GM10248 (cell line): ENCODE measurements at regions of chr16 and their contacts with region 1.

Region 1: DNA sequence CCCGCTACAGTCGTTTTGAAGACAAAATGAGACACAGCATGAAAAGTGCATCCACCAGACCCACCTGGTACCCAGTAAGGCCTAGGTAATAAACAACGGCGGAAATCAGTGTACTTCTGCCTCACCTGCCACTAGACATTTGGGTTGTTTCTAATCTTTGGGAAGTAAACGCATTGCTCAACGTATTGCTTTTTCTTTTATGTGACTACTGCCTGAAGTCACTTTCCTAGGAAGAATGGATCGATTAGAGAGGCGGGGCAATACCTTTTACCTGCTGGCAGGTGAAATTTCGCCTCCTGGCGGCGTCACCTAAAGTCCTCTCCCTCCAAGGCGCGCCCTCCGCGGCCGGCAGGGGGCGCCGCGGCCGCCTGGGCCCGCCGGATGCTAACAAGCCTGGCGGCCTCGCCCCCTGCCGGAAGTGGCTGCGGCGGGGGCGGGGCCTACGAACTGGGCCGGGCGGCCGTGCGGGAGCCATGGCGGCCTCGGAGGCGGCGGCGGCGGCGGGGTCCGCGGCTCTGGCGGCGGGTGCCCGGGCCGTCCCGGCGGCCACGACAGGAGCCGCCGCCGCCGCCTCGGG is at the start of gene ATMIN:
- DNase-seq: peak; percentile 98
- CTCF ChIP-seq: peak; percentile 98

Region 2: DNA sequence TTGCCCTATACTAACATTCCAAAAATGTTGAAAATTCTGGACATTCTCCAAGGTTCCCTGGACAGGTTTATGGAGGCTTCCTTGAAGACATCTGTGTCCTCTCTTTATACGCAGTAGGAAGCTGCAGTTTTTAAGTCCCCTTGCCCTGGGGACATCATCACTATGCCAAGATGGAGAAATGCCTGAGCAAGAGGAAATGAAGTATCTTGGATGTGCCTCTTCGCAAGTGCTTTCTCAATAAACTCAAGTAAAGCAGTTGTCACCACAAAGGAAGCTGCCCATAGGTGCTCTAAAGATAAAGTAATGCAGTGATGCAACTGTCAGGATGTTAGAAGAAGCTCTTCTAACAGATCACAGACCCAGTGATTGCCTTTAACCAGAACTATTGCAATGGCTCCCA is 302.1 kb before region 1 on chr16:
- CTCF ChIA-PET with region 1: no interaction called
- POLR2A ChIA-PET with region 1: no interaction called
- DNase-seq: no peak
- CTCF ChIP-seq: no peak

Region 3: DNA sequence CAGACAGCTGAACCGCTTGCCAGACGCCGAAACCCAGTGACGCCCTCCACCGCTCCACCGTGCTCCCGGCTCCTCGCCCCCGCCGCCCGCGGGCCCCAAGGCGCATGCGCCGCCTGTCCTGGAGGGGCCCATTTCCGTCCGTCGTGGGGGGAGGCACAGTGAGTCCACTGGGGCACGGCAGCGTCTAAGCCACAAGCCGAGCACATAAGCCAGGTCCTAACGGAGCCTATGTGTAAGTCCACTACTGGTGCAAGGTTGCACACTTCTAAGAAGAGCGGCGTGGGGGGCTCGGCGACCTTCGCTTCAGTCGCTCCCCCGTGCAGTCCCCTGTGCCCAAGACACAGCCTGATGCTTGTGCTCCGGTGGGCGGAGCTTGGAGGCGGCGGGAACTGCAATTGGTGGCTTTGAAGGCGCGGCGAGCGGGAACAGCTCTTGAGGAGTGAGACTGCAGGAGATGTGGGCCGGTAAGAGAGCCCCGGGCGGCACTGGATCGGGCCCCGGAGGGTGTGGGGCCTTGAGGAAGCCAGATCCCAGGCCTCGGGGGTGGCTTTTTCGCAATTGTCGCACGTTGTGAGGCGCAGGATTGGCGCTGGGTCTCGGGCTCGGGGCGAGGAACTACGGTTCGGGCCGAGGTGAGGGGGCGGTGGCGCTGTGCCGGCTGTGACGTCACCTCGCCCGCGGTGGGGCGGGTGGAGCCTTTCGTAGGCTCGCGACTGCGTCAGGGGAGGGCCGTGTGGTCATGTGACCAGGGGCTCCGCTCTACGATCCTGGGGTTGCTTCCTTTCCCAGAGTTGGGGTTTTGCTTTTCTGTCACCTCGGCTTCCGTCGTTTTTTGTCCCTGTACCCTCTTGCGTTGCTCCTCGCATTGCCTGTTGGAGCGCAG is 28.4 kb before region 1 on chr16 and contains the starts of genes CENPN and CMC2:
- CTCF ChIA-PET with region 1: interaction called, 169 read pairs
- POLR2A ChIA-PET with region 1: no interaction called
- DNase-seq: peak; percentile 94
- CTCF ChIP-seq: no peak

Region 4: GRCh38 chr16:81018496-81018895 is 17.0 kb before region 1 on chr16:
- CTCF ChIA-PET with region 1: interaction called, 169 read pairs
- POLR2A ChIA-PET with region 1: no interaction called
- DNase-seq: no peak
- CTCF ChIP-seq: no peak

Region 5: GRCh38 chr16:81060576-81061306 is 25.3 kb after region 1 on chr16:
- CTCF ChIA-PET with region 1: interaction called, 14 read pairs
- POLR2A ChIA-PET with region 1: no interaction called
- DNase-seq: no peak
- CTCF ChIP-seq: no peak

Region 6: DNA sequence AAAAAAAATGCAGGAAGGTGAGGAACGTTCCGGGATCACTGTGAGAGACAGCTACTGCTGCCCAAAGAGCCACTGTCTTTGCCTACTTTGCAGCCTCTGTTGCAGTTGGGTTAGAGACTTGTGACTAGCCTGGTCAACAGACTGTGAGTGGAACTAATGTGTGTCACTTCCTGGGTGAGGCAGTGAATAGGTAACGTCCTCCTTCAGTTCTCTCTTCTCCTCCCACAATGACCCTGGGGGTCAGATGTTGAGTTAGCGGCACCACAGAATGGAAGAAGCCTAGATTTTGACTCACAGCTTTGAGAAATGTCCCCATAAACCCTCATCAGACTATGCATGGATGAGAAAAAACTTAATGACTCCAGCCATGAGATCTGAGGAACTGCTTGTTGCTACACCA is 36.3 kb after region 1 on chr16:
- CTCF ChIA-PET with region 1: interaction called, 33 read pairs
- POLR2A ChIA-PET with region 1: no interaction called
- DNase-seq: no peak
- CTCF ChIP-seq: no peak

Region 7: GRCh38 chr16:81077076-81077940 is 41.8 kb after region 1 on chr16 and contains the start of gene C16orf46:
- CTCF ChIA-PET with region 1: interaction called, 33 read pairs
- POLR2A ChIA-PET with region 1: no interaction called
- DNase-seq: peak; percentile 98
- CTCF ChIP-seq: no peak

Region 8: DNA sequence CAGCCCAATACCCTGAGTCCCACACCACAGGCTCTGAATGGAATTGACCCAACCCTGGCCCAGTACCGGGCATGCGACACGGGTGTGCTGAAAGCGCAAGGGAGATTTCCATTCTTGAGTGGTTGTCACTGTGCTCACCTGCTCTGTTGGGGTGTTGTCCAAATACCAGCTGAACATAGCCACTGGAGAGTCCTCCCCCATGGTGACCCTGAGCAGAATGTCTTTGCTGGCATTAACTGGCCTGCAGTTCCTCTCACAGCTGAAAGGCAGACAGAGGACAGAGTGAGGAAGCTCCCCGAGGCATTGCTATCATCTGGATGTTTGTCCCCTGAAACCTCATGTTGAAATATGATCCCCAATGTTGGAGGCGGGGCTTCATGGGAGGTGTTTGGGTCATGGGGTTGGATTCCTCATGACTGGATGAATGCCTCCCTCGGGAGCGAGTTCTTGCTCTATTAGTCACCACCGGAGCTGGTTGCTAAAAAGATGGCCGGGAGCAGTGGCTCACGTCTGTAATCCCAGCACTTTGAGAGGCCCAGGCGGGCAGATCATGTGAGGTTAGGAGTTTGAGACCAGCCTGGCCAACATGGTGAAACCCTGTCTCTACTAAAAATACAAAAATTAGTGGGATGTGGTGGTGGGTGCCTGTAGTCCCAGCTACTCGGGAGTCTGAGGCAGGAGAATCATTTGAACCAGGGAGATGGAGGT is 145.7 kb after region 1 on chr16:
- CTCF ChIA-PET with region 1: no interaction called
- POLR2A ChIA-PET with region 1: no interaction called
- DNase-seq: no peak
- CTCF ChIP-seq: no peak